ENCODE measurements at regions of chr11 and their contacts with region 1.

Region 1: GRCh38 chr11:65418711-65419459 is 3.7 kb upstream of the NEAT1 start:
- DNase-seq: peak; percentile 96
- H3K4me3 ChIP-seq: peak overlapping the region in 1 of 3 experiments; percentile 17
- H3K27ac ChIP-seq: peak overlapping the region; percentile 100
- H3K4me1 ChIP-seq: peaks cover 57% of the 10 kb centered on the region
- H3K27me3 ChIP-seq: no peaks in the 10 kb centered on the region
- CTCF ChIP-seq: no peak

Region 2: DNA sequence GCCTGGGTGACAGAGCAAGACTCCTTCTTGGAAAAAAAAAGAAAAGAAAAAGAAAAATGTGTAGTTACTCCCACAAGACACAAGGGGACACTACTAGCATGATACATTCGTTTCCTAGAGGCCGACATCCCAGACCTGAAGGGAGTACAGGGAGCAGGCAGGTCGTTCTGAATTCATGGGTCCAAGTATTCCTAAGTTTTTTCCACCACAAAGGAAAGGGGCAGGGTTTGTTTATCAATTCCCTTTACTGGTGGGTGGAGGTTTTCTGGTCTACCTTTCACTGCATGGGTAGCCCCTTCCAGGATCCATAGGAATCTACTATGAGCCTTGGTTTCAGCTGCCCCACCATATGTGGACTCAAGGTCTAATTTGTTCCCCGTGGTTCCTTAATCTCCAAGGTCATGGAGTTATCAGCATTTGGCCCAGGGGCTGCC is 52.5 kb before region 1 on chr11:
- CTCF ChIA-PET with region 1: no interaction called
- dilution Hi-C with region 1: loop called (anchors 5 kb)
- in situ Hi-C with region 1: no loop called
- intact Hi-C with region 1: loop called (anchors 1 kb)
- DNase-seq: peak; percentile 65
- H3K4me3 ChIP-seq: no peak overlapping the region
- H3K27ac ChIP-seq: no peak overlapping the region
- H3K4me1 ChIP-seq: peaks cover 6% of the 10 kb centered on the region
- H3K27me3 ChIP-seq: no peaks in the 10 kb centered on the region
- CTCF ChIP-seq: peak; percentile 73 to 79

Region 3: GRCh38 chr11:65382033-65382807 is 36.7 kb before region 1 on chr11 and contains the start of gene SLC25A45:
- CTCF ChIA-PET with region 1: interaction called, 3 read pairs
- dilution Hi-C with region 1: no loop called
- in situ Hi-C with region 1: no loop called
- intact Hi-C with region 1: loop called (anchors 1 kb)
- DNase-seq: peak; percentile 100
- H3K4me3 ChIP-seq: peak within 1 kb of the TSS; percentile 17 to 31 (median 22)
- H3K27ac ChIP-seq: peak within 1 kb of the TSS; percentile 94
- H3K4me1 ChIP-seq: peaks cover 47% of the 10 kb centered on the region
- H3K27me3 ChIP-seq: no peaks in the 10 kb centered on the region
- CTCF ChIP-seq: peak; percentile 55 to 87
- total RNA-seq, gene SLC25A45: 0.50 to 2.4 TPM

Region 4: GRCh38 chr11:65439331-65440181 is 20.7 kb after region 1 on chr11:
- CTCF ChIA-PET with region 1: no interaction called
- dilution Hi-C with region 1: no loop called
- in situ Hi-C with region 1: no loop called
- intact Hi-C with region 1: no loop called
- DNase-seq: no peak
- H3K4me3 ChIP-seq: no peak overlapping the region
- H3K27ac ChIP-seq: no peak overlapping the region
- H3K4me1 ChIP-seq: peaks cover 12% of the 10 kb centered on the region
- H3K27me3 ChIP-seq: no peaks in the 10 kb centered on the region
- CTCF ChIP-seq: no peak

Region 5: DNA sequence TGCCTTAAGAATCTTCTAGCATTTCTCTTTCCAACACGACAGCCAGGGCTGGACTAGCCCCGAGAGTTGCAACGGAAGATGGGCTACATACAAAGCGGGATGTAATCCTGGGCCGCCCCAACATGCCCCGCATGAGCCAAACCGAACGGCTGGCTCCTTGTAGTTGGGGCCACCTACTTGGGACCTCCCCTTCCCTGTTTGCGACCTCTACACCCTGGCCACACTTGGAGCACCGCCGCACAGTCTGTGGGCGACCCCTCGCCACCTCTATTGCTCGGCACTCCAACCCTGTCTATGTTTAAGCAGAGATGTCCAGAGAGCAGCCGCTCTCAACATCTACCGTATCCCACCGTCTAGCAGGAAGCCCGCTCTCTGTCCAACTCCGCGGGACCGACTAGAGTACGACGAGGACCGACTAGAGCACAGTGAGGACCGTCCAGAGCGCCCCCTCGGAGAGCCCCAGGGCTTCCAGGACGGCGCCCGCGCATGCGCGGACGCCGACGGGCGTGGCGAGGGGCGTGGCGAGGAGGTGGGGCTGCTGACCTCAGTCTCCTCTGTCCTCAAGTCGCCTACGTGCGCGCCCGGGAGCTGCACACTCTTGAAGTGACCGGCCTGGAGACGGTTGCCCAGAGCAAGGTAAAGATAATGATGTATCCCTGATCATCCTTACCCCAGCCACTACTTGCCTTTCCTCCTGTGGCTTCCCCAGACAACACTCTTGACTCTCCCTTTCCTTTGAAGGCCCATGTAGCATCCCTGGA is 36.0 kb after region 1 on chr11:
- CTCF ChIA-PET with region 1: interaction called, 14 read pairs
- dilution Hi-C with region 1: no loop called
- in situ Hi-C with region 1: no loop called
- intact Hi-C with region 1: no loop called
- DNase-seq: peak; percentile 68
- H3K4me3 ChIP-seq: peak overlapping the region; percentile 20 to 51 (median 47)
- H3K27ac ChIP-seq: peak overlapping the region; percentile 52
- H3K4me1 ChIP-seq: peaks cover 24% of the 10 kb centered on the region
- H3K27me3 ChIP-seq: no peaks in the 10 kb centered on the region
- CTCF ChIP-seq: no peak

Region 6: GRCh38 chr11:65497141-65498041 is 78.5 kb after region 1 on chr11:
- CTCF ChIA-PET with region 1: interaction called, 6 read pairs
- dilution Hi-C with region 1: loop called (anchors 5 kb)
- in situ Hi-C with region 1: no loop called
- intact Hi-C with region 1: no loop called
- DNase-seq: peak; percentile 98
- H3K4me3 ChIP-seq: peak overlapping the region; percentile 47 to 99 (median 75)
- H3K27ac ChIP-seq: peak overlapping the region; percentile 98
- H3K4me1 ChIP-seq: peaks cover 48% of the 10 kb centered on the region
- H3K27me3 ChIP-seq: no peaks in the 10 kb centered on the region
- CTCF ChIP-seq: no peak

Region 7: GRCh38 chr11:65569973-65570918 is 151.4 kb after region 1 on chr11 and contains the start of gene ZNRD2:
- CTCF ChIA-PET with region 1: interaction called, 34 read pairs
- dilution Hi-C with region 1: no loop called
- in situ Hi-C with region 1: no loop called
- intact Hi-C with region 1: loop called (anchors 1 kb)
- DNase-seq: peak; percentile 99
- H3K4me3 ChIP-seq: peak within 1 kb of the TSS; percentile 60 to 97 (median 91)
- H3K27ac ChIP-seq: peak within 1 kb of the TSS; percentile 81
- H3K4me1 ChIP-seq: peaks cover 56% of the 10 kb centered on the region
- H3K27me3 ChIP-seq: no peaks in the 10 kb centered on the region
- CTCF ChIP-seq: peak; percentile 47 to 48
- total RNA-seq, gene ZNRD2: 35.2 to 52.8 TPM

Measured in mammary epithelial cell (primary cell).